SK-N-SH (cell line): ENCODE measurements at regions of chr18 and their contacts with region 1.

Region 1: GRCh38 chr18:59823596-59824195 is 76.1 kb upstream of the PMAIP1 start:
- DNase-seq: peak; percentile 64
- H3K4me3 ChIP-seq: no peak overlapping the region; a peak in 1 of 4 replicates
- H3K27ac ChIP-seq: peak overlapping the region in 1 of 2 experiments; percentile 54; a peak in 2 of 4 replicates
- H3K4me1 ChIP-seq: peaks cover 0 to 12% of the 10 kb centered on the region in 2 experiments; a peak in 1 of 4 replicates
- H3K27me3 ChIP-seq: no peaks in the 10 kb centered on the region
- CTCF ChIP-seq: peak; percentile 94
- EP300 ChIP-seq: no peak
- RAD21 ChIP-seq: peak; percentile 99

Region 2: GRCh38 chr18:59308248-59308937 is 515.3 kb before region 1 on chr18:
- CTCF ChIA-PET with region 1: interaction called, 29 read pairs
- POLR2A ChIA-PET with region 1: no interaction called
- DNase-seq: peak; percentile 92
- H3K4me3 ChIP-seq: peak overlapping the region; percentile 36 to 65
- H3K27ac ChIP-seq: no peak overlapping the region
- H3K4me1 ChIP-seq: peaks cover 0 to 3% of the 10 kb centered on the region in 2 experiments; a peak in 1 of 4 replicates
- H3K27me3 ChIP-seq: peaks cover 31% of the 10 kb centered on the region; the same call in 1 of the 2 replicates
- CTCF ChIP-seq: peak; percentile 95
- EP300 ChIP-seq: no peak
- RAD21 ChIP-seq: peak; percentile 71

Region 3: DNA sequence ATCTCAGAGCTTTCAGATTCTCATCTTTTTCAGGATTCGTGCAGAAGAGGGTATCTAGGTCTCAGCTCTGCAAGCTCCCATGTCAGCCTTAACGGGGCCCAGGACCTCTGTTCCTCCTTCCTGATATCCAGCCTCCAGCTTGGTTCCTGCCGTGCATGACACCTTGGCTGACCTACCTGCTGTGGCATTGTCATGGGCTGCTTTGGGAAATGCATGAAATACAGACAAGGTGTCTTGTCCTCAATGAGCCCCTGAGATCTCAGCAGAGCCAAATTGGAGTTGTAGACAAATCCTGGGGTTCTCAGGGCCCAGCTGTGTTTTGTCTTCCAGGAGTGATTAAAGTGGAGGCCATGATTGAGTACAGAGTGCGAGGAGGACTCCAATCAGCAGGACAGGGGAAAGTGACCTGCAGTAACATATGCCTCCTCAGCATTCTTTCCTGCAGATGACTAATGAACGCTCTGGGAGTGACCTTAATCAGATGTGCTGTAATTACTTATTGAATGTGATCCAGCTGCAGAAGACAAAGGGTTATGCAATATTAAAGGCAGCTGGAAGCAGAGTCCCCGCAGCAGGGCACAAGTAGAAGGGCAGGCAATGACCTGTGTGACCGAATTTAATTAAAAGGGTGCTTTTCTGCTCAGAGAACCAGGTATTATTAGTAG is 267.6 kb before region 1 on chr18:
- CTCF ChIA-PET with region 1: interaction called, 15 read pairs
- POLR2A ChIA-PET with region 1: no interaction called
- DNase-seq: peak; percentile 52
- H3K4me3 ChIP-seq: no peak overlapping the region
- H3K27ac ChIP-seq: peak overlapping the region in 1 of 2 experiments; percentile 55; a peak in 2 of 4 replicates
- H3K4me1 ChIP-seq: peaks cover 0 to 33% of the 10 kb centered on the region in 2 experiments; a peak in 2 of 4 replicates
- H3K27me3 ChIP-seq: no peaks in the 10 kb centered on the region
- CTCF ChIP-seq: no peak
- EP300 ChIP-seq: peak in 1 of 2 experiments; percentile 92; a peak in 2 of 4 replicates
- RAD21 ChIP-seq: peak; percentile 25; the same call in 1 of the 2 replicates

Region 4: GRCh38 chr18:59617468-59617932 is 206.2 kb before region 1 on chr18:
- CTCF ChIA-PET with region 1: interaction called, 18 read pairs
- POLR2A ChIA-PET with region 1: no interaction called
- DNase-seq: peak; percentile 71
- H3K4me3 ChIP-seq: no peak overlapping the region
- H3K27ac ChIP-seq: peak overlapping the region in 1 of 2 experiments; percentile 94; a peak in 2 of 4 replicates
- H3K4me1 ChIP-seq: peaks cover 0 to 22% of the 10 kb centered on the region in 2 experiments; a peak in 2 of 4 replicates
- H3K27me3 ChIP-seq: no peaks in the 10 kb centered on the region
- CTCF ChIP-seq: no peak
- EP300 ChIP-seq: peak; percentile 4 to 61; a peak in 3 of 4 replicates
- RAD21 ChIP-seq: peak; percentile 45; the same call in 1 of the 2 replicates

Region 5: GRCh38 chr18:59631583-59632181 is 192.0 kb before region 1 on chr18:
- CTCF ChIA-PET with region 1: interaction called, 74 read pairs
- POLR2A ChIA-PET with region 1: no interaction called
- DNase-seq: peak; percentile 35
- H3K4me3 ChIP-seq: no peak overlapping the region
- H3K27ac ChIP-seq: no peak overlapping the region
- H3K4me1 ChIP-seq: peaks cover 0 to 4% of the 10 kb centered on the region in 2 experiments; a peak in 2 of 4 replicates
- H3K27me3 ChIP-seq: no peaks in the 10 kb centered on the region
- CTCF ChIP-seq: peak; percentile 90
- EP300 ChIP-seq: no peak
- RAD21 ChIP-seq: peak; percentile 83

Region 6: GRCh38 chr18:59837586-59837985 is 13.9 kb after region 1 on chr18:
- CTCF ChIA-PET with region 1: interaction called, 32 read pairs
- POLR2A ChIA-PET with region 1: no interaction called
- DNase-seq: peak; percentile 64
- H3K4me3 ChIP-seq: no peak overlapping the region; a peak in 1 of 4 replicates
- H3K27ac ChIP-seq: no peak overlapping the region
- H3K4me1 ChIP-seq: peaks cover 2 to 5% of the 10 kb centered on the region in 2 experiments; a peak in 1 of 4 replicates
- H3K27me3 ChIP-seq: no peaks in the 10 kb centered on the region
- CTCF ChIP-seq: peak; percentile 97
- EP300 ChIP-seq: no peak
- RAD21 ChIP-seq: peak; percentile 87